ENCODE measurements at regions of chr6 and their contacts with region 1.

Region 1: DNA sequence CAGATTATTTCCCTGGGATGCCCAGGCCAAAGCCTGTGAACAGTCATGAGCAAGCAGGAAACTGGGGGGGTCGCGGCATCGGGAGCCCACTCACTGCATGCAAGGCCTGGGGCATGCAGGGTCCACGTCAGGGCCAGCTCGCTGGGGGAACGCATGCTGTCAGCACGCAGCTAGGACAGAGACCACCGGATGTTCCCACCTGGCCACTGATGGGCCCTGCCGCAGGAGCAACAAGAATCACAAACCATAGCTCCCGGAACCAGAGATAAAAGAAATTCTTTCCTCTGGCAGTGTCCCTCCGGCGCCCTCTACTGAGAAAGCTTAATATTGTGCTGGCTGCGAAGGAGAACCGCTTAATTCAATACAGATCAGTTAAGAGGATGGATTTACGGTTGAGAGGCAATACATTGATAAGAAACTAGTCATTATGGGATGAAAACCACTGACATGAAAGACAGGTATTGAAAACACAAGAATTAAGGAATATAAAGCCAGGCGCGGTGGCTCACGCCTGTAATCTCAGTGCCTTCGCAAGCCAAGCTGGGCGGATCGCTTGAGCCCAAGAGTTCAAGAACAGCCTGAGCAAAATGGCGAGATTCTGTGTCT is 32.6 kb downstream of the C6orf15 start:
- DNase-seq: peak; percentile 36 to 71 (median 49)
- H3K4me3 ChIP-seq: peak overlapping the region; percentile 37
- H3K4me3 Mint-ChIP-seq: peak overlapping the region in 6 of 7 donors; percentile 63 to 88 (median 72)
- H3K27ac ChIP-seq: no peak overlapping the region
- H3K27ac Mint-ChIP-seq: peak overlapping the region in 3 of 8 donors; percentile 36 to 57 (median 38)
- H3K4me1 ChIP-seq: peaks cover 5% of the 10 kb centered on the region
- H3K4me1 Mint-ChIP-seq: peaks cover 2 to 9% (median 9%) of the 10 kb centered on the region in 3 donors
- H3K27me3 ChIP-seq: no peaks in the 10 kb centered on the region
- H3K27me3 Mint-ChIP-seq: peaks cover 3 to 5% of the 10 kb centered on the region in 2 donors

Region 2: DNA sequence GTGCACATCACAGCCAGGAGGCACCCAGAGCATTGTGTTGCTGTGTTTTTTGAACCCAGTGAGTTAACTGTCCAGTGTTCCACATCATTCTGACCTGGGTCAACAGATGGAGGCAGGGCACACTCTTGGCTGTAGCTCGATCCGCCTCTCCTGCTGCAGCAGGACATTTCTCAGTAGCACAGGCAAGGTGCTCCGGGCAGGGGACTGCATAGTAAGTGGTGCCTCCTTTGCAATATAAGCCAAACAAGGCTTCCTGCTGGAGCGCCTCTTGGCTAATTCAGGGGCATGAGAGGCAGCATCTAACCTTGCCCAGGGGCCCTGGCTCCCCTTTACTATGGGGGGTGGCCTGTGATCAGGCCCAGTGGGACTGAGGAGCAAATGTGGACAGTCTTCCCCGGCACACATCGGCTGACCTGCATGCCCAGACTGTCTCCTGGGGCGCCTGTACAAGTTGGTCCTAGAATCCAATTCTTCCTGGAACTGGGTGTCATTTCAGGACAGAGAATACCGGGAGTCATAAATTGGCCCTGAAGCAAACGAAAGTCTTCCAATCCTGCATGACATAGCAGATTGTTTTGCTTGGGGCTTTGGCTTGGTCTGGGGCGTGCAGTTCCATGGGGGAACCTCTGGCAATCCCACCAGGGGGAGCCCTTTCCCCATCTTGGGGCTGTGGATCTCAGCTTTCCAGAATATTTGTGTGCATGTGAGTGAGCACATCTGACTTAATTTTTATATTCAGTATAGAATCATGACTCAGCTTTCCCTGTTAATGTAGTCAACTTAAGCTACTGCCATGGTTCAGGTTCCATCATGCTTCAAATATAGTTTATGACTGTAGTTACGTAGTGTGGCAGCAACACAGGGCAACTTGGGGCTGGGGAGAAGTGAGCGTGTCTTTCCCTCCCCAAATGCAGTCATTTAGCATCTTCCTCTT is 251.5 kb before region 1 on chr6:
- CTCF ChIA-PET with region 1: interaction called, 12 read pairs
- POLR2A ChIA-PET with region 1: no interaction called
- DNase-seq: peak; percentile 62 to 83 (median 67)
- H3K4me3 ChIP-seq: peak overlapping the region; percentile 73
- H3K4me3 Mint-ChIP-seq: peak overlapping the region; percentile 89 to 94 (median 93)
- H3K27ac ChIP-seq: peak overlapping the region; percentile 76
- H3K27ac Mint-ChIP-seq: peak overlapping the region; percentile 37 to 100 (median 95)
- H3K4me1 ChIP-seq: peaks cover 44% of the 10 kb centered on the region
- H3K4me1 Mint-ChIP-seq: peaks cover 69 to 90% (median 79%) of the 10 kb centered on the region in 3 donors
- H3K27me3 ChIP-seq: no peaks in the 10 kb centered on the region
- H3K27me3 Mint-ChIP-seq: peaks cover 0 to 4% of the 10 kb centered on the region in 2 donors

Region 3: GRCh38 chr6:31060145-31060544 is 19.6 kb before region 1 on chr6:
- CTCF ChIA-PET with region 1: interaction called, 15 read pairs
- POLR2A ChIA-PET with region 1: no interaction called
- DNase-seq: no peak
- H3K4me3 ChIP-seq: no peak overlapping the region
- H3K4me3 Mint-ChIP-seq: no peak overlapping the region
- H3K27ac ChIP-seq: no peak overlapping the region
- H3K27ac Mint-ChIP-seq: no peak overlapping the region
- H3K4me1 ChIP-seq: no peaks in the 10 kb centered on the region
- H3K4me1 Mint-ChIP-seq: no peaks in the 10 kb centered on the region
- H3K27me3 ChIP-seq: no peaks in the 10 kb centered on the region
- H3K27me3 Mint-ChIP-seq: peaks cover 13 to 33% of the 10 kb centered on the region in 2 donors

Region 4: DNA sequence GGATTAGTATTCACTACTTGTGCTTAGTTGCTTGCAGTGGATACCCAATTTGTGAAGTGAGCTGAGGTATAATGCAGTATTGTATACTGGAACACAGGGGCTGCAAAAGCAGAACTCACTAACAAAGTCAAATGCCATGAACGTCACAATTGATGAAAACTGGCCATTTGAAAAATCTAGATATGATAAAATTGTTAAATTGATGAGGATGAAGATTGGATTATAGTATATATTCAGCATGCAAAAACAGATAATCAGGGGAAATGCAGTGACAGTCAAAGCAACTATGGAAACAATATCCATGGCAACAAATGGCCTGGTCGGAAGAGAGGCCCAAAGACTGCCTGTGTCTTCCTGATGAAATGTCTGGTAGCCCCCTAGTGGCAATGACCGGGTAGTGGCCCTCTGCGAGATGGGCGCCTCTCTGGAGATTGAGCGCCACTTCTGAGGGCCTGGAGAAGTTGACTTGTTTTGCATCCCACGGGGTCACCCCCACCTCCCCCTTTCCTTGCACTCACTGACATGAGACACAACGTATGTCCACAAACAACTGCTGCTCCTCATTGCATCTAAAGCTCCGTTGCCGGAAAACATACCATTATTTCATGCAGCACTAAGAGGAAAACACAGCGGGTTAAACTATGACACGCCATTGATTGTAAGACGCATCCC is 11.0 kb before region 1 on chr6:
- CTCF ChIA-PET with region 1: interaction called, 33 read pairs
- POLR2A ChIA-PET with region 1: no interaction called
- DNase-seq: peak; percentile 52 to 82 (median 57)
- H3K4me3 ChIP-seq: no peak overlapping the region
- H3K4me3 Mint-ChIP-seq: no peak overlapping the region
- H3K27ac ChIP-seq: no peak overlapping the region
- H3K27ac Mint-ChIP-seq: no peak overlapping the region
- H3K4me1 ChIP-seq: no peaks in the 10 kb centered on the region
- H3K4me1 Mint-ChIP-seq: peaks cover 0 to 5% (median 0%) of the 10 kb centered on the region in 3 donors
- H3K27me3 ChIP-seq: no peaks in the 10 kb centered on the region
- H3K27me3 Mint-ChIP-seq: peaks cover 0 to 10% of the 10 kb centered on the region in 2 donors

Region 5: GRCh38 chr6:31094389-31094881 is 14.7 kb after region 1 on chr6:
- CTCF ChIA-PET with region 1: interaction called, 22 read pairs
- POLR2A ChIA-PET with region 1: interaction called, 4 read pairs
- DNase-seq: peak in 4 of 5 donors; percentile 24 to 63 (median 42)
- H3K4me3 ChIP-seq: peak overlapping the region; percentile 18
- H3K4me3 Mint-ChIP-seq: peak overlapping the region in 6 of 7 donors; percentile 51 to 81 (median 74)
- H3K27ac ChIP-seq: peak overlapping the region; percentile 19
- H3K27ac Mint-ChIP-seq: peak overlapping the region; percentile 17 to 95 (median 86)
- H3K4me1 ChIP-seq: peaks cover 44% of the 10 kb centered on the region
- H3K4me1 Mint-ChIP-seq: peaks cover 40 to 45% (median 40%) of the 10 kb centered on the region in 3 donors
- H3K27me3 ChIP-seq: no peaks in the 10 kb centered on the region
- H3K27me3 Mint-ChIP-seq: no peaks in the 10 kb centered on the region